ENCODE measurements at regions of chr19 and their contacts with region 1.

Region 1: GRCh38 chr19:11856596-11857250 is 8.2 kb downstream of the ZNF439 start:
- DNase-seq: peak in 1 of 2 experiments; percentile 55
- H3K4me3 ChIP-seq: no peak overlapping the region
- H3K27ac ChIP-seq: no peak overlapping the region
- H3K4me1 ChIP-seq: no peaks in the 10 kb centered on the region
- H3K27me3 ChIP-seq: peaks cover 55% of the 10 kb centered on the region
- CTCF ChIP-seq: no peak

Region 2: GRCh38 chr19:11242864-11243797 is 613.6 kb before region 1 on chr19:
- CTCF ChIA-PET with region 1: interaction called, 15 read pairs
- POLR2A ChIA-PET with region 1: no interaction called
- intact Hi-C with region 1: no loop called
- DNase-seq: peak; percentile 60 to 89
- H3K4me3 ChIP-seq: no peak overlapping the region
- H3K27ac ChIP-seq: no peak overlapping the region
- H3K4me1 ChIP-seq: no peaks in the 10 kb centered on the region
- H3K27me3 ChIP-seq: no peaks in the 10 kb centered on the region
- CTCF ChIP-seq: peak; percentile 91

Region 3: DNA sequence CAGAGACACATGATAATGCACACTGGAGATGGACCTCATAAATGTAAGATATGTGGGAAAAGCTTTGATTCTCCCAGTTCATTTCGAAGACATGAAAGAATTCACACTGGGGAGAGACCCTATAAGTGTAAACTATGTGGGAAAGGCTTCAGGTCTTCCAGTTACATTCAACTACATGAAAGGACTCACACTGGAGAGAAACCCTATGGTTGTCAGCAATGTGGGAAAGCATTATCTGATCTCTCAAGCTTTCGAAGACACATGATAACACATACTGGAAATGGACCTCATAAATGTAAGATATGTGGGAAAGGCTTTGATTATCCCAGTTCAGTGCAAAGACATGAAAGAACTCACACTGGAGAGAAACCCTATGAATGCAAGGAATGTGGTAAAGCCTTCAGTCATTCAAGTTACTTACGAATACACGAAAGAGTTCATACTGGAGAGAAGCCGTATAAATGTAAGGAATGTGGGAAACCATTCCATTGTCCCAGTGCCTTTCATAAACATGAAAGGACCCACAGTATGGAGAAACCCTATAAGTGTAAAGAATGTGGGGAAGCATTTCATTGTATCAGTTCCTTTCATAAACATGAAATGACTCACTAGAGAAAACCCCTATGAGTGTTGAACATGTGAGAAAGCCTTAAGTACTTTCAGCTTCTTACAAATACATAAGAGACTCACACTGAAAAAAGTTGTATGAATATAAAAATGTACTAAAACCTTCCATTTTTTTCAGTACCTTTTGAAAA is 75.2 kb before region 1 on chr19:
- CTCF ChIA-PET with region 1: no interaction called
- POLR2A ChIA-PET with region 1: no interaction called
- intact Hi-C with region 1: no loop called
- DNase-seq: no peak
- H3K4me3 ChIP-seq: no peak overlapping the region
- H3K27ac ChIP-seq: no peak overlapping the region
- H3K4me1 ChIP-seq: 0 out of 2 replicates have a peak, but pooled peaks cover 3% of the 10 kb centered on the region
- H3K27me3 ChIP-seq: no peaks in the 10 kb centered on the region
- CTCF ChIP-seq: no peak

Region 4: GRCh38 chr19:11798391-11799330 is 58.1 kb before region 1 on chr19 and contains the start of gene ZNF491:
- CTCF ChIA-PET with region 1: interaction called, 6 read pairs
- POLR2A ChIA-PET with region 1: no interaction called
- intact Hi-C with region 1: loop called (anchors 5 kb)
- DNase-seq: peak in 1 of 2 experiments; percentile 69
- H3K4me3 ChIP-seq: peak within 1 kb of the TSS; percentile 19; the same call in 1 of the 2 replicates
- H3K27ac ChIP-seq: no peak within 1 kb of the TSS
- H3K4me1 ChIP-seq: no peaks in the 10 kb centered on the region
- H3K27me3 ChIP-seq: no peaks in the 10 kb centered on the region
- CTCF ChIP-seq: no peak
- total RNA-seq, gene ZNF491: not detected in 2 replicates

Measured in PC-9 (cell line).